CD8-positive, alpha-beta T cell (primary cell): ENCODE measurements at regions of chr17 and their contacts with region 1.

Region 1: DNA sequence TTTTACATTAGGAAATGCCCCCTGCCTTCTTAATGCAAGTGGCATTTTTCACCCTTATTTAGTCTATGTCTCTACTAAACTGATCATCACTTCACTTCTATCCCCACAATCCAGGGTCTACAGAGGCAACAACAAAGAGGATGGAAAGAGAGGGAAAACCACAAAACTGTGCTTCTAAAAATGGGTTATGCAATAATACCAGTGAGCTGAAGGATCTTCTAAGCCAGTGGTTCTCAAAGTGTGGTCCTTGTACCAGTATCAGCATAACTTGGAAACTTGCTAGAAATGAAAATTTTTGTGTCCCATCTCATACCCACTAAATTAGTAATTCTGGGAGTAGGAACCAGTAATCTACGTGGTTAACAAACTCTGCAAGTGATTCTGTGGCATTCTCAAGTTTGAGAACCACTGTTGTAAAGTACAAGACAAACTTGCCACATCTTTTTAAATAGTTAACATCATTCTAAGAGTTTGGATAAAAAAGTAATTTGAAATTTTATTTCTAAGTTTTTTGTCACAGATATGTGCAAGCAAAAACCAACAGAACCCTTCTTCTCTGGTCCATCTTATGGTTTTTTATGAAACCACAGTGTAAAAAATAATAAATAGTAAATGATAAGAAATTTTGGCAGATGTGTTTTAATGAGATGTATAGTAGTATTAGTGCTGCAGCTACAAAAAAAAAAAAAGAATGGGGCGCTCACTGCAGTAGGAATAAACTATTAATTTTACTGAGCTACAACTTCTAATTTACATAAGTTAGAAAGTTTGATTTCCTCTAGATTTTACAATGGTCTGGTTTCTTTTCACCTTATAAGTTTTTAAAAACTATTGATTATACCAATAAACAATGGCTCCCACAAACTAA is 16.2 kb downstream of the CDC27 start:
- DNase-seq: no peak
- ATAC-seq: no peak
- H3K4me3 ChIP-seq: no peak overlapping the region
- H3K4me3 Mint-ChIP-seq: no peak overlapping the region
- H3K27ac ChIP-seq: no peak overlapping the region
- H3K27ac Mint-ChIP-seq: no peak overlapping the region
- H3K4me1 ChIP-seq: peaks cover 7% of the 10 kb centered on the region
- H3K4me1 Mint-ChIP-seq: peaks cover 37% of the 10 kb centered on the region
- H3K27me3 ChIP-seq: no peaks in the 10 kb centered on the region
- H3K27me3 Mint-ChIP-seq: no peaks in the 10 kb centered on the region
- CTCF ChIP-seq: no peak

Region 2: DNA sequence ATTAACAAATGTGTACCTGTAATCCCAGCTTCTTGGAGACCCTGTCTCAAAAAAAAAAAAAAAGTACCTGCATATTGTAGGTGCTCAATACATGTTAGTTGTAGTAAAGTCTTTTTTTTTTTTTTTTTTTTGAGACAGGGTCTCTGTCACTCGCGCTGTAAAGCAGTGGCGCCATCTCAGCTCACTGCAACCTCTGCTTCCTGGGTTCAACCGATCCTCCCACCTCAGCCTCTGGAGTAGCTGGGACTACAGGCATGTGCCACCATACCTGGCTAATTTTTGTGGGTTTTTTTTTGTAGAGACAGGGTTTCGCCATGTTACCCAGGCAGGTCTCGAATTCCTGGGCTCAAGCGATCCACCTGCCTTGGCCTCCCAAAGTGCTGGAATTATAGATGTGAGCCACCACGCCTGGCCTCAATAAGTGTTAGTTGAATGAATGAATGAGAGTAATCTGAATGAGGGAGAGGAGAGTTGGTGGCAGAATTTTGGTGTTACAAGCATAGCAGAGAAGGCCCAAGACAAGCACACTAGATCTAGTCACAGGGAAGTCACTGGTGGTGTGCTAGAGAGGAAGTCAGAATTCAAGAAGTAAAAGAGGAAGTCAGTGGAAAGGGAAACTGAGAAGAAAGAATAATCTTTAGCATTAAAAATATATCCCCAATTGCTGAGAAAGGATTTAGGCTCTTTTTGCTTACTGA is 26.8 kb after region 1 on chr17:
- CTCF ChIA-PET with region 1: no interaction called
- POLR2A ChIA-PET with region 1: no interaction called
- intact Hi-C with region 1: loop called in 1 of 2 experiments (anchors 2 kb)
- DNase-seq: no peak
- ATAC-seq: no peak
- H3K4me3 ChIP-seq: no peak overlapping the region
- H3K4me3 Mint-ChIP-seq: no peak overlapping the region
- H3K27ac ChIP-seq: no peak overlapping the region
- H3K27ac Mint-ChIP-seq: peak overlapping the region; percentile 30
- H3K4me1 ChIP-seq: peaks cover 26% of the 10 kb centered on the region
- H3K4me1 Mint-ChIP-seq: peaks cover 27% of the 10 kb centered on the region
- H3K27me3 ChIP-seq: no peaks in the 10 kb centered on the region
- H3K27me3 Mint-ChIP-seq: no peaks in the 10 kb centered on the region
- CTCF ChIP-seq: no peak